Kidney (tissue), 22 donors: ENCODE measurements at regions of chr2 and their contacts with region 1.

Region 1: GRCh38 chr2:84925724-84926376 is 20.4 kb downstream of the TMSB10 start:
- DNase-seq: peak; percentile 96 to 98 (median 97)
- H3K4me3 ChIP-seq: peak overlapping the region; percentile 34 to 67 (median 54)
- H3K27ac ChIP-seq: no peak overlapping the region
- H3K4me1 ChIP-seq: peaks cover 0 to 11% (median 0%) of the 10 kb centered on the region in 3 donors
- H3K27me3 ChIP-seq: no peaks in the 10 kb centered on the region
- CTCF ChIP-seq: peak; percentile 99

Region 2: DNA sequence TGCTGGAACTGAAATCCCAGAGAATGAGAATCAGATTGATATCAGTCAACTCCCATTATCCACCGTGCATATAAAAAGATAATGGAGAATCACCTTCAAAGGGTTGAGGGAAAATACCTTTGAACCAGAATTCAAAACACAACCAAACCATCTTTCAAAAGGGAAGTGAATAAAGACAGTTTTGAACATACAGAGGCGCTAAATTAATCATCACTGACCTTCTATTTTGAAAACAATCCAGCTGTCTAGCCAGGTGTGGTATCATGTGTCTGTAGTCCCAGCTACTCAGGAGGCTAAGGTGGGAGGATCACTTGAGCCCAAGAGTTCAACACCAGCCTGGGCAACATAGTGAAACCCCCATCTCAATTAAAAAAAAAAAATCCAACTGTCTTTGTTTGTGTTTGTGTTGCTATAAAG is 108.6 kb before region 1 on chr2:
- intact Hi-C with region 1: no loop called
- DNase-seq: no peak
- H3K4me3 ChIP-seq: no peak overlapping the region
- H3K27ac ChIP-seq: no peak overlapping the region
- H3K4me1 ChIP-seq: no peaks in the 10 kb centered on the region
- H3K27me3 ChIP-seq: no peaks in the 10 kb centered on the region
- CTCF ChIP-seq: no peak

Region 3: DNA sequence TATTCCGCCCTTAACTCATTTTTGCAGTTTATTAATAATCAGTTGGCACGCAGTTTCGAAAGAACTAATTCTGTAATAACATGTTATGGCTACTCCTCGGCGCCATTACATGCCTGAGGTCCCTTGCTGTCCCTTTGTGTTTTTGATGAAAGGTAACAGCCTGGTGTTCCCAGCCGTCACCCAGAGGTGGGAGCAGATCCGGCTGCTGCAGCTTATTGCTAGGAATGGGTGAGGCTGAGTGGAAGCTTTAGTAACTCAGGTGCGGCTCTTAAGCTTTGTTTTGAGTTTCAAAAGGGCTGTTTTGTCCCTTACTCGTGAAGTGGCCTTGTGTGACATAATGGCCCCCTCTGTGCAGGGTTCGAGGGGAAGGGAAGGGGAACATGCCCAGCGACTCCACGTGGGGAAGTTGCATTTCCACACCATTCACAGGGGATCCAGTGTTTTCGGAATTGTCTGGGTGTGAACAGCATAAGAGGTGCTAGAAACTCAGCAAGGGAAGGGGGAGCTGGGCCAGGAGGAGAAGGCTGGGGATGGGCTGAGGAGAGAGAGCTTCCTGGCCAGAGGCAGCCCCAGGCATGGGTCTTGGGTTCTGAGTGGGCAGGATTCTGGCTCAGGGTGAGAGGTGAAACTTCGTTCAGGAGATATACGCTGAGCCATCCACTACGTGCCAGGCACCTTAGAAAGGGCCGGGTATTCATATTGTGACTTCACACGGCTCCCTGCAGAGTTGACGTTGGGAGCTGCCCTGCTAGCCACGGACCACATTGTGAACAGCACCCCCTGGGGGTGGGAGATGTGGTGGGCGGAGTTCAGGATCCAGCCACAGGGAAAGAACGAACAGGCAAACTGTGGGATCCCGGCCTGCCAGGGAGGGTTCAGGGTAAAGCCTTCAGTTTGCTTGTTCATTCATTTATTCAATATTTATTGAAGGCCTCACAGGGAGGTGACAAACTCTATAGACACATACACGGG is 317.5 kb after region 1 on chr2:
- intact Hi-C with region 1: no loop called
- DNase-seq: peak in 2 of 5 donors; percentile 55 to 66
- H3K4me3 ChIP-seq: no peak overlapping the region
- H3K27ac ChIP-seq: no peak overlapping the region
- H3K4me1 ChIP-seq: peaks cover 5 to 16% (median 9%) of the 10 kb centered on the region in 3 donors
- H3K27me3 ChIP-seq: no peaks in the 10 kb centered on the region
- CTCF ChIP-seq: peak; percentile 51

Region 4: DNA sequence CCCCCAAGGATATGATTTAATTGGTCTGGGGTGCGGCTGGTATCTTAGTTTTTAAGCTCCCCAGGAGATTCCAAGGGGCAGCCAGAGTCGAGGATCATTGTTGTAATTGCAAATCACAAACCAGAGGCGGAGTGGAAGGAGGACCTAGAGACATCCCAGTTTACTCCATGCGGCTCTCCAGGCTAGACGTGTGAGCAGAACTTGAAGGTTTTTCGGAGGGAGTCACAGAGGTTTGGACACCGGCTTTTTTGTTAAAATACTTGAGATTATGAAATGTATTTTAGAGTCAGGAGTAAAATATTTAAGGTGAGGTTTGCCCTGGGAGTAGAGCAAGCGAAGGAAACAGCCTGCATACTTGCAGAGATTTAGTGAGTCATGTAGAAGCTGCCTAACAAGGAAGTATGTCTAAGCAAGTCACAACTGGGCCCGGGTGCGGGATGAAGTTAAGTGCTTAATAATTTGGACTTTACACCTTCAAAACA is 362.4 kb after region 1 on chr2:
- intact Hi-C with region 1: loop called (anchors 10 kb)
- DNase-seq: no peak
- H3K4me3 ChIP-seq: no peak overlapping the region
- H3K27ac ChIP-seq: no peak overlapping the region
- H3K4me1 ChIP-seq: peaks cover 0 to 2% (median 0%) of the 10 kb centered on the region in 3 donors
- H3K27me3 ChIP-seq: no peaks in the 10 kb centered on the region
- CTCF ChIP-seq: no peak